Mammary epithelial cell (primary cell): ENCODE measurements at regions of chr1 and their contacts with region 1.

Region 1: DNA sequence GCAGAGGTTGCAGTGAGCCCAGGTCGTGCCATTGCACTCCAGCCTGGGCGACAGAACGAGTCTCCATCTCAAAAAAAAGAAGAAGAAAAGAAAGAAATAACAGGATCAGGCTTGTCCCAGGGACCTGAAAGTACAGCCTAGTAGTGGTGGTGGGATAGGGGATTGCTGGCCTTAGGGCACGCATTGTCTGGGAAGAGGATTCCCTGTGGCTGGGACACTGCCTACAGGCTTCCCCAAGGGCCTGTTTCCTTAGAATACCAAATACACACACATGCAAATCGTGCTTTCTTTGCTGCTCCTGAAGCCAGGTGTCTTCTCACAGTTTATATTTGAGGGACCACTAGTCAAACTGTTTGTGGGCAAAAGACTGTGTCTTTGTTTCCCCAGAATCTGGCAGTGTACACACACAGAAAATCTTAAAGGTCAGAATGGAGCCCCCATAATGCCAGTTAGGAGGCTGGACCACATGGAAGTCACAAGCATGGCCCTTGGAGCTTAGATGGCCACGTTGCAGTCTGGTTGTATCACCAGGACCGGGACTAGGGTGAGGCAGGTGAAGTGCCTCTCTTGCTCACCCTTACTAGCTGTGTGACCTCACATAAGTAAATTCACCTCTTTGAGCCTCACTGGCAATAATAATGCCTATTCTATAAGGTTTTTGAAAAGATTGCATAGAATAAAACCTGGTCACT is 12.7 kb upstream of the ASAP3 start:
- DNase-seq: no peak
- H3K4me3 ChIP-seq: no peak overlapping the region
- H3K27ac ChIP-seq: no peak overlapping the region
- H3K4me1 ChIP-seq: no peaks in the 10 kb centered on the region
- H3K27me3 ChIP-seq: no peaks in the 10 kb centered on the region
- CTCF ChIP-seq: no peak

Region 2: DNA sequence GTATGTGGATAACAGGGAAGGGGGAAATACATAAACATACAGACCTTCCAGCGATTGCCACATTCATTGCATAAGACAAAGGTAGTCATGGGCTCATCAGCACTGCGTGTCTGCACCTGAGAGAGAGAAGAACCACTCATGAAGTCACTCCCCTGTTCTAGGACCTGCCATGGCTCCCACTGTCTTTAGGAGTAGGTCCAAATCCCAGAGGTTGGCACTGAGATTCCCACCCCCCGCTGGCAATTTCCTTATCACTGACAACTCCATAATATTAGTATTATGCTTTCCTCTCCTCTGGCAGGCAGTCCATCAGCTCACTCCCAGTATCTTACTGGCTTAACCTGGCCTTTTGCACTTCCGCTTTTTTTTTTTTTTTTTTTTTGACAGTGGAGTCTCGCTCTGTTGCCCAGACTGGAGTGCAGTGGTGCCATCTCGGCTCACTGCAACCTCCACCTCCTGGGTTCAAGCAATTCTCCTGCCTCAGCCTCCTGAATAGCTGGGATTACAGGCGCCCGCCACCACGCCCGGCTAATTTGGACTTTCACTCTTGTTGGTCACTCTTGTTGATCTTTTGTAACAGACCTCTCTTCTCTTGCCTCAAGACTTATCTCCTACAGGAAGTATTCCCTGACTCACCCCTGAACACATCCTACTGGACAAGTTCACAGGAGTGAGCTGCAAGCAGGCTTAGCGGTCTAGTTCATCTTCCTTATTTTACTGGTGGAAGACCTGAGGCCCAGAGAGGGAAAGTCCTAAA is 112.2 kb before region 1 on chr1:
- CTCF ChIA-PET with region 1: no interaction called
- dilution Hi-C with region 1: no loop called
- in situ Hi-C with region 1: no loop called
- intact Hi-C with region 1: no loop called
- DNase-seq: peak; percentile 77
- H3K4me3 ChIP-seq: no peak overlapping the region
- H3K27ac ChIP-seq: peak overlapping the region; percentile 19
- H3K4me1 ChIP-seq: peaks cover 27% of the 10 kb centered on the region
- H3K27me3 ChIP-seq: no peaks in the 10 kb centered on the region
- CTCF ChIP-seq: no peak

Region 3: DNA sequence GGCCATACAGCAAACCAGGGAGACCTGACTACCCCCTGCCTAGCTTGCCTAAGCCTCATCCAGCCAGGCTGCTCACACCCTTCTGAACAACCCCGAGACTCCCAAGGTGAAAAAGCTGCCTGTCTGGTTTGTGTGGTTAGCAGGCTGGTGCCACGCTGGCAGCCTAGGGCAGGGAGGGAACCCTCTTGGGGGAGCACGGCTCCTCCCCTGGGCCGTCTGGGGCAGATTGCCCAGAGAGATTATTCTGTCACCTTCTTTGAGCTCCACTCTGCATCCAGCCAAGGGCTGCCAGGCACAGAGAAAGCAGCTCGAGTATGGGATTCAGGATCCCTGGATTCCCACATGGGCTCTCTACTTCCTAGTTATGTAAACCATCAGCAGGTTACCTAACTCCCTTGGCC is 44.6 kb before region 1 on chr1:
- CTCF ChIA-PET with region 1: interaction called, 3 read pairs
- dilution Hi-C with region 1: no loop called
- in situ Hi-C with region 1: no loop called
- intact Hi-C with region 1: loop called (anchors 2 kb)
- DNase-seq: peak; percentile 94
- H3K4me3 ChIP-seq: no peak overlapping the region
- H3K27ac ChIP-seq: no peak overlapping the region
- H3K4me1 ChIP-seq: peaks cover 31% of the 10 kb centered on the region
- H3K27me3 ChIP-seq: no peaks in the 10 kb centered on the region
- CTCF ChIP-seq: no peak

Region 4: GRCh38 chr1:23530747-23531561 is 34.3 kb after region 1 on chr1 and contains the start of gene E2F2:
- CTCF ChIA-PET with region 1: no interaction called
- dilution Hi-C with region 1: no loop called
- in situ Hi-C with region 1: loop called in 1 of 2 experiments (anchors 5 kb)
- intact Hi-C with region 1: no loop called
- DNase-seq: peak; percentile 84
- H3K4me3 ChIP-seq: peak within 1 kb of the TSS; percentile 46 to 65 (median 58)
- H3K27ac ChIP-seq: peak within 1 kb of the TSS; percentile 12
- H3K4me1 ChIP-seq: peaks cover 34% of the 10 kb centered on the region
- H3K27me3 ChIP-seq: no peaks in the 10 kb centered on the region
- CTCF ChIP-seq: peak in 1 of 2 donors; percentile 31
- total RNA-seq, gene E2F2: 0.17 to 2.2 TPM

Region 5: GRCh38 chr1:23559136-23559984 is 62.7 kb after region 1 on chr1 and contains the start of gene ID3:
- CTCF ChIA-PET with region 1: no interaction called
- dilution Hi-C with region 1: no loop called
- in situ Hi-C with region 1: no loop called
- intact Hi-C with region 1: no loop called
- DNase-seq: peak; percentile 96
- H3K4me3 ChIP-seq: peak within 1 kb of the TSS; percentile 61 to 76 (median 75)
- H3K27ac ChIP-seq: peak within 1 kb of the TSS; percentile 76
- H3K4me1 ChIP-seq: peaks cover 48% of the 10 kb centered on the region
- H3K27me3 ChIP-seq: no peaks in the 10 kb centered on the region
- CTCF ChIP-seq: no peak
- total RNA-seq, gene ID3: 53.6 to 53.8 TPM